CD4-positive, alpha-beta memory T cell (primary cell): ENCODE measurements at regions of chr2 and their contacts with region 1.

Region 1: GRCh38 chr2:6865346-6866274 is at the start of gene CMPK2:
- DNase-seq: peak; percentile 80 to 87 (median 84)
- H3K4me3 ChIP-seq: peak within 1 kb of the TSS; percentile 88 to 95
- H3K4me3 Mint-ChIP-seq: peak within 1 kb of the TSS; percentile 89 to 100 (median 96)
- H3K27ac ChIP-seq: peak within 1 kb of the TSS; percentile 41
- H3K27ac Mint-ChIP-seq: peak within 1 kb of the TSS; percentile 88 to 99 (median 96)
- H3K4me1 ChIP-seq: peaks cover 22% of the 10 kb centered on the region
- H3K4me1 Mint-ChIP-seq: peaks cover 12 to 23% (median 17%) of the 10 kb centered on the region in 4 donors
- H3K27me3 ChIP-seq: no peaks in the 10 kb centered on the region
- H3K27me3 Mint-ChIP-seq: no peaks in the 10 kb centered on the region
- total RNA-seq, gene CMPK2: 3.5 to 4.1 TPM

Region 2: GRCh38 chr2:6826081-6826913 is 39.3 kb before region 1 on chr2:
- CTCF ChIA-PET with region 1: interaction called, 8 read pairs
- POLR2A ChIA-PET with region 1: no interaction called
- intact Hi-C with region 1: loop called (anchors 1 kb)
- DNase-seq: peak; percentile 40 to 50 (median 46)
- H3K4me3 ChIP-seq: no peak overlapping the region
- H3K4me3 Mint-ChIP-seq: no peak overlapping the region
- H3K27ac ChIP-seq: no peak overlapping the region
- H3K27ac Mint-ChIP-seq: no peak overlapping the region
- H3K4me1 ChIP-seq: no peaks in the 10 kb centered on the region
- H3K4me1 Mint-ChIP-seq: peaks cover 8 to 12% (median 9%) of the 10 kb centered on the region in 4 donors
- H3K27me3 ChIP-seq: no peaks in the 10 kb centered on the region
- H3K27me3 Mint-ChIP-seq: no peaks in the 10 kb centered on the region

Region 3: DNA sequence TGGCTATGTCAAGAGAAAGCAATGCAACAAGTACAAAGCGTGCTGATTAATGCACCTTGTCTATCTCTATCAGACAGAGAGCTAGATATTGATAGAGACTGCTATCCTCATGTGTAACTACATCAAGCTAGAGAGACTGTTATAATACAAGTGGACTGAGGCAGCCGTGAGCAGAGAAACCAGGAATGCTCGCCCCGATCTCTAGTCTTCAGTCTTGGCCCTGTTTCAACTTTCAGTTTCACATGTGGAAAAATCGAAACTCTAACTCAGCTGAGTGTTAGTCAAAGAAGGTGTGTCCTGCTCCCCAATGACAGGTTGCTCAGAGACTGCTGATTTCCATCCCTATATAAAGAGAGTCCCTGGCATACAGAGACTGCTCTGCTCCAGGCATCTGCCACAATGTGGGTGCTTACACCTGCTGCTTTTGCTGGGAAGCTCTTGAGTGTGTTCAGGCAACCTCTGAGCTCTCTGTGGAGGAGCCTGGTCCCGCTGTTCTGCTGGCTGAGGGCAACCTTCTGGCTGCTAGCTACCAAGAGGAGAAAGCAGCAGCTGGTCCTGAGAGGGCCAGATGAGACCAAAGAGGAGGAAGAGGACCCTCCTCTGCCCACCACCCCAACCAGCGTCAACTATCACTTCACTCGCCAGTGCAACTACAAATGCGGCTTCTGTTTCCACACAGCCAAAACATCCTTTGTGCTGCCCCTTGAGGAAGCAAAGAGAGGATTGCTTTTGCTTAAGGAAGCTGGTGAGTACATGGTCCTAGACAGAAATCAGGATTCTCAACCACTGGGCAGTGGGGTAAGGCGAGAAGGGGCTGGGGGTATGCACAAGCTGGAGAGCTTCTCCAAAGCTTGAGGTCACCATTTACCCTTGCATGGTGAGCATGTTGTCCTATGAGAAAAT is 12.0 kb after region 1 on chr2 and contains the start of gene RSAD2:
- CTCF ChIA-PET with region 1: interaction called, 116 read pairs
- POLR2A ChIA-PET with region 1: interaction called, 77 read pairs
- intact Hi-C with region 1: loop called (anchors 1 kb)
- DNase-seq: peak; percentile 52 to 61 (median 56)
- H3K4me3 ChIP-seq: peak within 1 kb of the TSS; percentile 52 to 67
- H3K4me3 Mint-ChIP-seq: peak within 1 kb of the TSS; percentile 85 to 93 (median 90)
- H3K27ac ChIP-seq: peak within 1 kb of the TSS; percentile 59
- H3K27ac Mint-ChIP-seq: peak within 1 kb of the TSS; percentile 82 to 93 (median 90)
- H3K4me1 ChIP-seq: peaks cover 54% of the 10 kb centered on the region
- H3K4me1 Mint-ChIP-seq: peaks cover 41 to 57% (median 46%) of the 10 kb centered on the region in 4 donors
- H3K27me3 ChIP-seq: no peaks in the 10 kb centered on the region
- H3K27me3 Mint-ChIP-seq: no peaks in the 10 kb centered on the region
- total RNA-seq, gene RSAD2: 3.8 to 4.9 TPM

Region 4: GRCh38 chr2:6909431-6910385 is 44.1 kb after region 1 on chr2:
- CTCF ChIA-PET with region 1: interaction called, 6 read pairs
- POLR2A ChIA-PET with region 1: interaction called, 29 read pairs
- intact Hi-C with region 1: no loop called
- DNase-seq: peak; percentile 73 to 81 (median 75)
- H3K4me3 ChIP-seq: peak overlapping the region in 1 of 2 donors; percentile 40
- H3K4me3 Mint-ChIP-seq: peak overlapping the region; percentile 63 to 88 (median 78)
- H3K27ac ChIP-seq: peak overlapping the region; percentile 4
- H3K27ac Mint-ChIP-seq: peak overlapping the region; percentile 76 to 98 (median 93)
- H3K4me1 ChIP-seq: peaks cover 86% of the 10 kb centered on the region
- H3K4me1 Mint-ChIP-seq: peaks cover 72 to 91% (median 78%) of the 10 kb centered on the region in 4 donors
- H3K27me3 ChIP-seq: no peaks in the 10 kb centered on the region
- H3K27me3 Mint-ChIP-seq: no peaks in the 10 kb centered on the region

Region 5: DNA sequence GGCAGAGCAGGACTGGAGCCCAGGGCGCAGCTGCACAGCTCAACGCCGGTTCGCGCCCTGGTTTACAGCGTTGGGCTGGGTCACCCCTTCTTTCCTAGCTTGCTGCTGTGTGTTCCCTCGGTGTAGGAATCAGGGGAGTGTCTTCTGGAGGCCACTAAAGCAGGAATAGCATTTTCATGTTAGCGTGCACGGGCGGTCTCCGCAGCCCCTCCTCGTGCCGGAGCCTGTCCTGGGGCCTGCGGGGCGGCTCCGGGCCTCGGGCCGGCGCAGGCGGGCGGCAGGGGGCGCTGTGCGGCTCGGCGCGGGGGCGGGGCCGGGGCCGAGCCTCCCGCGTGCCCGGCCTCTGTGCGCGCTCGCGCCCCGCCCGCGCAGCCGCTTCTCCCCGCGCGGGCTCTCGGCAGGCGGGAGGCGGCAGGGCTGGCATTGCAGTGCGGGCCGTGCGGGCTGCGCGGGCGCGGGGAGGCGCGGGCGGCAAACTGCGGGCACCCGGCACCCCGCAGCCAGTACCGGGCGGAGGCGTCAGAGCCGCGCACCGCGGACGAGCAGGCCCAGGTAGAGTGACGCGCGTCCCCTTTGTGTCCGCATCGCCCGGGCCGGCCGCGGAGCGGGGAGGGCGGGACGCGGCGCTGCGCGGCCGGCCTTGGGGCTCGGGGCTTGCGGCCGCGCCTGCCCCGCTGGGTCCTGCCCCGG is 51.6 kb after region 1 on chr2 and contains the start of gene RNF144A:
- CTCF ChIA-PET with region 1: interaction called, 4 read pairs
- POLR2A ChIA-PET with region 1: interaction called, 16 read pairs
- intact Hi-C with region 1: loop called (anchors 1 kb)
- DNase-seq: peak; percentile 64 to 83 (median 76)
- H3K4me3 ChIP-seq: peak within 1 kb of the TSS; percentile 44 to 47
- H3K4me3 Mint-ChIP-seq: peak within 1 kb of the TSS; percentile 72 to 84 (median 78)
- H3K27ac ChIP-seq: peak within 1 kb of the TSS; percentile 43
- H3K27ac Mint-ChIP-seq: peak within 1 kb of the TSS in 5 of 7 donors; percentile 57 to 88 (median 74)
- H3K4me1 ChIP-seq: peaks cover 68% of the 10 kb centered on the region
- H3K4me1 Mint-ChIP-seq: peaks cover 46 to 79% (median 60%) of the 10 kb centered on the region in 4 donors
- H3K27me3 ChIP-seq: no peaks in the 10 kb centered on the region
- H3K27me3 Mint-ChIP-seq: no peaks in the 10 kb centered on the region
- total RNA-seq, gene RNF144A: 34.3 to 41.1 TPM

Region 6: DNA sequence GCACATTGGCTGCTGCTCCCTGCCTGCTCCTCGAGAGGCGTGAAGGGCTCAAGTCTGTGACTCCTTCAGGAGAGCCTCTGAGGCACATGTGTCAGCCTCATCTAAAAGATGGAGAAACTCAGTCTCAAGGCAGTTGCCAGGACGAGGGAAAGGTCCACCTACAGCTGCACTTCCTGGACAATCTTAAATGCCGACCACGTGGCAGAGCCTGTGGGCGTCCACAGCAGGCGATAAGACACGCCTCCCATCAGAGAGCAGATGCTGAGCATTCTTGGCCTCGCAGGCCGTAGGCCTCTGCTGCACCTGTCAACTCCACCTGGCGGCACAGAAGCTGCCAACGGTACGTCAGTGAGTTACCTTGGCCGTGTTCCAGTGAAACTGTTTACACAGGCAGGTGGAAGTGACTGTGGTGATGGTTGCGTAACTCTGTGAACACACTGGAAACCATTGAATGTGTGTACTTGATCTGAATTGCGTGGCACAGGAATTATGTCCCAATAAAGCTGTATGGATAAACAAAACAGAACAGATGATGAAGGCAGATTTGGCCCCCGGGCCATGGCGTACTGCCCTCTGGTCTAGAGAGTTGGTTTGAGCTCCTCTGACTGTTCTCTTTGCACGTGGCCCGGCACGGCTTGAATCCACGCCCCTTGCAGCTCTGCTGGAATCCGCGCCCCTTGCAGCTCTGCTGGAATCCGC is 166.1 kb after region 1 on chr2:
- CTCF ChIA-PET with region 1: interaction called, 4 read pairs
- POLR2A ChIA-PET with region 1: interaction called, 11 read pairs
- intact Hi-C with region 1: no loop called
- DNase-seq: peak; percentile 74 to 87 (median 80)
- H3K4me3 ChIP-seq: no peak overlapping the region
- H3K4me3 Mint-ChIP-seq: peak overlapping the region in 1 of 8 donors; percentile 65
- H3K27ac ChIP-seq: peak overlapping the region; percentile 15
- H3K27ac Mint-ChIP-seq: peak overlapping the region; percentile 76 to 93 (median 88)
- H3K4me1 ChIP-seq: peaks cover 12% of the 10 kb centered on the region
- H3K4me1 Mint-ChIP-seq: peaks cover 11 to 34% (median 21%) of the 10 kb centered on the region in 4 donors
- H3K27me3 ChIP-seq: no peaks in the 10 kb centered on the region
- H3K27me3 Mint-ChIP-seq: no peaks in the 10 kb centered on the region